Cardiac septum (tissue), 1 donor: ENCODE measurements at regions of chr1 and their contacts with region 1.

Region 1: DNA sequence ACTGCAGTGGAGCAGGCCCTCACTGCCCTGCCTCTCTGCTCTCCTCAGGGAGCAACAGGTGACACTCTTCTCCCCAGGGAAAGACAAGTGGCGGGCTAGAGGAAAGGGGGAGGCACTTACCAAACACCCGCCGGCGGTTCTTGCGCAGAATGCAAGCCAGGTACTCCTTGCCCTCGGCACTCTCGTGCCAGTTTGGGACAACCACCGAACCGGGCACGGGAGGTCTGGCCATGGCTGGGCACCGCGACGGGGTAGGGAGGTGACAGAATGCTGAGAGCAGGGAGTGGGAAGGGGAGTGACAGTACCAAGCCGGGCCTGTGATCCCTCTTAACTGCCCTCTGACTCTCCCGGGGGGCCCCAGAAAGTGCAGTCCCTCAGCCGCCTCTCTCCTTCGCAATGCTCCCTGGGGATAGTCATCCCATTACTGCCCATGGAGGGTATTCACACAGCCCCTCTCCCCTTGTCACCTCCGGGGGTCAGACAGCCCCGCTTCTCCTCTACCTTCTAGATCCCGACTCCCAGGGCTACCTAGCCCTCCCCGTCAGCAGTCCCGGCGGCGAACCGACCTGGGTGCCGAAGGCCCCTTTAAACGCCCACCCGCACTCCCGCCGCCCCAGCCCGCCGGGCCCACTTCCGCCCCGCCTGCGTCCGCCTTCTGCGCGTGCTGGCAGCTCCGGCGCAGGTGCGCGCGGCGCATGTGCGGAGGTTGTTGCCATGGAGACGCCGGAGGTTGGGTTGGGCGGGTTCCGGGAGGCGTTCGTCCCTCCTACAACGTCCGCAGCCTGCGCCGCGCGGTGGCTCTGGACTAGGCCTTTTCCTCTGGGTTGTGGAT is at the start of gene CPLANE2:
- DNase-seq: peak; percentile 97
- total RNA-seq, gene CPLANE2: 10.6 TPM

Region 2: GRCh38 chr1:16206547-16207317 is 30.0 kb before region 1 on chr1:
- intact Hi-C with region 1: loop called (anchors 2 kb)
- DNase-seq: peak; percentile 97